ENCODE measurements at regions of chr12 and their contacts with region 1.

Region 1: DNA sequence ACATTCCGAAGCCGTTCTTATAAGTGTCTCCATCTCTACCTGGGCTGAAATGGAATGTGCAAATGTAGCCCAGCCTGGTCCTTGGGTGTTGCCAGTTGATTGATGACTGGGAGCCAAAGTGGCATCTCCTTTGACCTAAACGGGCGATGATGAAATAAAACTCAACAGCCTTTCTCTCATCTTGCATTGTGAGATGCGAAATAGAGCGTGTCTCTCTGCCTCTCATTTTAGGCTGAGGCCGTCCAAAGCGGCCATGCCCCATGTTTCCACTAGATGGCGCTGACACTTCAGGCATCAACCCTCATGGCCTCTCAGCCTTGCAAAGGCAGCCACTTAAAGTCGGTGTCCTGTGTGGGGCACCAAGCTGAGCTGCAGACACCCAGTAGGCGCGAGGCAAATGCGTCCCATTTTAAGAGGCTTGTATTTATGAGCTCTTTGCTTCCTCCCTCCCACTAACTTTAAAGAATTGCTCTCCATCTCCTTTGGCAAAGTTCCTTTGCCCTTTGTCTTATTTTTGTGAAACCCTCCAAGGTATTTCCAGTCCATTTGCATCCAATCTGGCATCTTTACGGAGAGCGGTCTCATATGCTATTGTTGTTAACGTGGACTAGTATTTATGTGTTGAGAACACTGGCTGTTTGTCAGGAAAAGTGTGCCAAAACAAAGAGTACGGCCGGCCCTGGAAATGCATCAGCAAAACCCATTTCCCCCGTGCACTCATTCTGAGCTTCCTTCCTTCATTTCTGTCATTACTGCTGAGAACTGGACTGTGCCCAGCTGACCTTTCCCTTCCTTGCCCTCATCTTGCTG is 25.0 kb downstream of the GPRC5A start:
- DNase-seq: peak; percentile 90

Region 2: GRCh38 chr12:12983420-12984035 is 67.2 kb after region 1 on chr12:
- intact Hi-C with region 1: loop called (anchors 1 kb)
- DNase-seq: no peak

Region 3: DNA sequence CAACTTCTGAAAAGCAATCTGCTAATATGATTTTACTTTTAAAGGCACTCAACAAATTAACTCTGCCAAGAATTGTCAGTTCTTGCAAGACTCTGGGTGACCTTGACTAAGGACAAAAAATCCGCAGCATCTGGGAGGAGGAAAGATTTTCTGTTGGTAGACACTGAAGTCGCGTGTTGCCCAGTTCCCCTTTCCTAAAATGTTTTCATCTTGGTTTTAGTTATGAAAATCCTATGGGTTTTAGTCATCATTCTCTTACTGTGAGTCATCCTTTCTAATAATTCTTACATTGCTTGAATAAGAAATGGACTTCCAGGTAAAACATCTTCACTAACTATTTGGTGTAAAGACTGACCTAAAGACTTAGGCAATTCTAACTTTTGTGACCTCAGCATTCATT is 178.0 kb after region 1 on chr12:
- intact Hi-C with region 1: loop called (anchors 10 kb)
- DNase-seq: no peak

Region 4: DNA sequence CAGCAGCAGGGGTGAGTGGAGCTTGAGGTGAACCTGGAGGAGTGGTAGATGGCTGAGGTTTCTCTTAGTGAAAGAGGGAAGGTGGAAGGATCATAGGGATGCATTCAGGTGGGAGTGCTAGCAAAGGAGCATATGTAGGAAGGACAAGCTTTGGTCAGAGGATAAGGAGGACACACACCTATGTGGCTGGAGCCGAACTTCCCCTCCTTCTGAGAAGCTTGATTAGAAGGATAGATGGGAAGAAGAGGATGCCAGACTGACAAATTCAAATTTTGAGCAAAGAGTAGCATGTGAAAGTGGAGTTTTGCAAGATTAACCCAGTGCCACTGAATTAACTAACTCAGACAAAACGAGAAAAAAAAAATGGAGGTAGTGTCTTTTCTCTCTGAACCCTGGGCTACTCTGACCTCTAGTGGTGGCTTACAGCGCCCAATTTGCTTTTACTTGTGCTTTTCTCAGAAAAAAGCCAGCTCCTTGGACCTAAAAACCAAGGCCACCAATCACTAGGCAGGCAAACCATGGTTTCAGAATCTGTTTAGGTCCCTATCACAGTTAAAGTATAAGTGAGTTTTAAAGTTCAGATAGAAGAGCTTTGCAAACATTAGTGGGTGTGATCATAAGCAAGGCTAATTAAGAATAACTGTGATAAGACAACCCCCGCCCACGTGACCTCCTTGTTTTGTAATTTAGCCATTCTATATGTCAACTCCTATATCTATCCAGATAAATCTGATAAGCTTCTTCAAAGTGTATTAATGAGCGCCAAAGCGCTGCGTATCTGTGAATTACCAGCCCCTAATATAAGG is 295.7 kb after region 1 on chr12:
- intact Hi-C with region 1: loop called (anchors 2 kb)
- DNase-seq: no peak

Region 5: GRCh38 chr12:13233830-13234641 is 317.7 kb after region 1 on chr12:
- intact Hi-C with region 1: loop called (anchors 5 kb)
- DNase-seq: no peak

Measured in cardiac septum (tissue), 1 donor.